Ovary (tissue), 10 donors: ENCODE measurements at regions of chr21 and their contacts with region 1.

Region 1: GRCh38 chr21:42862774-42863503 is 16.4 kb downstream of the WDR4 start:
- DNase-seq: peak in 1 of 5 donors; percentile 25
- H3K4me3 ChIP-seq: no peak overlapping the region
- H3K27ac ChIP-seq: no peak overlapping the region
- H3K4me1 ChIP-seq: peaks cover 12% of the 10 kb centered on the region
- H3K27me3 ChIP-seq: no peaks in the 10 kb centered on the region
- CTCF ChIP-seq: no peak
- EP300 ChIP-seq: no peak
- POLR2A ChIP-seq: no peak

Region 2: DNA sequence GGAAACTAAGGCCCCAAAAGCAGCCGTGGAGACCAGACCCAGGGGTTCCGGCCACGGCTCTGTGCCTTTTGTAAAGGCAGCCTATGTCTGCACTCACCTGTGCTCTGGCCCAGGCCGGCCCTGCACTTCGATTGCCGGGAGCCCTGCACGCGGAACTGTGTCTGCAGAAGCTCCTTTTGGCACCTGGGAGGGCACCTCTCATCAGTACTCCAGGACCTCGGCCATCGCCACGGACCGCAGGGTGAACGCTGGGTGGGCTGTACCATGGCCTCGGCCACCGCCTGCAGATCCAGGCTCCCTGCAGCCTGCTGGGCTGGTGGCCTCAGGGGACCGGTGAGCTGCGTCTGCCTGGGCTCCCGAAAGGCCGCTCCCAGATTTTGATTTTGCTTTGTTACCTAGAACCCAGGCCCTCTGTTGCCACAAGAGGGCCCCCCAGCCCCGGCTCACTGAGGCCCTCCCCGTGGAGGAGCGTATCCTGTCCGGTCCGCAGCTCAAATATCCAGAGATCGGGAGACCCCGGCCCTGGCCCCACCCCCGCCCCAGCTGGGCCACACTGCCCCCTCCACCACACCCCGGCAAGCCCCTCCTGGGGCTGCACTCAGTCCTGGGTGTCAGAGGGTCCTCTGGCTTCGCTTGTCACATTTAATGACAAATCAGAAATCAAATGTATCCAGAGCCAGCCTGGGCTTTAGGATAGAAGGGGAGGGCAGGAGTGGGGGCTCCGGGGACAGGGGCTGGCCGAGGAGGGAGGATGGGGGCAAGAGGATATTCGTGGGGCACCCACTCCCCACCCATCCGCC is 269.7 kb before region 1 on chr21:
- intact Hi-C with region 1: loop called in 1 of 4 experiments (anchors 10 kb)
- DNase-seq: peak; percentile 60 to 85 (median 76)
- H3K4me3 ChIP-seq: no peak overlapping the region
- H3K27ac ChIP-seq: no peak overlapping the region
- H3K4me1 ChIP-seq: no peaks in the 10 kb centered on the region
- H3K27me3 ChIP-seq: no peaks in the 10 kb centered on the region
- CTCF ChIP-seq: peak; percentile 47 to 64 (median 57)
- EP300 ChIP-seq: no peak
- POLR2A ChIP-seq: no peak